Activated CD8-positive, alpha-beta T cell treated with anti-CD3 and anti-CD28 coated beads for 36 hours (primary cell): ENCODE measurements at regions of chr18 and their contacts with region 1.

Region 1: DNA sequence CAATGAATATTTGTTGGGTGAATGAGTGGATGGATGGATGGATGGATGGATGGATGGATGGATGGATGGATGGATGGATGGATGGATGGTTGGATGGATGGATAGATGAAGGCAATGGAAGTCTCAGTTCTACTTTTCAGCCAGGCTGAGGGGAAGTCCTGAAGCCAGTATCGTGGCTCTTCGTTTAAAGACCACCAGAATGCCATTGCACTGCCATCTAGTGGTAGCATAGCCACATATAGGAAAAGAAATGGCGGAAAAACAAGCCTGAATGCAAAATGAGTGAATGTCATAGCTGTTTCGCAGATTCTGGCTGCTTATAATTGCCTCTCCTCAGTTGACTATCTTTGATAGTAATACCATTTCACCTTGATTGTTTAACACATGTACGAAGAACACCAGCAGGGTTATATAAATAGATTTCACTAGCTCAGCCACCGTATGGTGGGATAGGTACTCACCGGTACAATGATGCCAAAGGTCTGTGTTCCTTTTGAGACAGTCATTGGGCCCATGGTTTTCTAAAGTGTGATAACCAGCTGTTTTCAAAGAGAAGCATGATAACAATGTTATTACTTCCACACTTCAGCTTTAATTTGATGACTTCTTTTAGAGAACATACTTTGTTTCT is 62.3 kb upstream of the GREB1L start:
- DNase-seq: peak; percentile 73
- ATAC-seq: peak; percentile 76
- H3K4me3 Mint-ChIP-seq: no peak overlapping the region
- H3K27ac Mint-ChIP-seq: no peak overlapping the region
- H3K4me1 Mint-ChIP-seq: peaks cover 9% of the 10 kb centered on the region
- H3K27me3 Mint-ChIP-seq: no peaks in the 10 kb centered on the region
- CTCF ChIP-seq: peak; percentile 73

Region 2: DNA sequence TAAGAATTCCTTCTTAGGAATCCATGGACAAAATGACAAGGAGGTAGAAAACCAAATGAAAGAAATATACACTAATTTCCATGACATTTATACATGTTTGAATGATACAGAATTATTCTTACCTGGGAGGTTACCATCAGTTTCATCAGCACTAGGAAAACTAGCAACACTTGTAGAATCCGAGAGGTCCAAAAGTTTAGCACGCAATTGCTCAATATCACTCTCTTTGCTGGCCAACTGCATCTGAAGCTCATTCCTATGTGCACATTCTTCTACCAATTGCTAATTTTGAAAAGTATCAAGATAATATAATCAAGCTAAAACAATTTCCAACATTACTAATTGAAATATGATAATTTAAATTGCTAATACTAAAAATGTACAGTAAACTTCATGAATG is 212.9 kb before region 1 on chr18:
- CTCF ChIA-PET with region 1: interaction called, 12 read pairs
- POLR2A ChIA-PET with region 1: no interaction called
- intact Hi-C with region 1: no loop called
- DNase-seq: no peak
- ATAC-seq: no peak
- H3K4me3 Mint-ChIP-seq: no peak overlapping the region
- H3K27ac Mint-ChIP-seq: no peak overlapping the region
- H3K4me1 Mint-ChIP-seq: no peaks in the 10 kb centered on the region
- H3K27me3 Mint-ChIP-seq: no peaks in the 10 kb centered on the region
- CTCF ChIP-seq: no peak

Region 3: DNA sequence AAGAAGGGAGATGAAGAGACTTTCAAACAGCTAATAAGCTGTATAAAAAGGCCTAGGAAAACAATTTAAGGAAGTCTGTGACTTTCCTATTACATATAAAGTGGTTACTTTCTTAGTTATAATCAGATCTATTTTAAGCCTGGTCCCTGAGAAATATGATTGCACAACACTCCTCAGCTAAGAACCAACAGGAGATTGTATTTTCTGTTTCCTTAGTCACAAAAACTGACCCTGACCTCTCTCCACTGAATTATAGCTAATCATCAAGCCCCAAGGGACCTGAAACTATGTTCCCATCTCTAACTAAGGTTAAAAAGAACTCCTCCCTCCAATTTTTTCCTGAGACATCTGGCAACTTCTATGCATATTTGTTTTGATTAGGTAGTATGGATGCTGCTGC is 175.0 kb before region 1 on chr18:
- CTCF ChIA-PET with region 1: interaction called, 8 read pairs
- POLR2A ChIA-PET with region 1: no interaction called
- intact Hi-C with region 1: loop called (anchors 10 kb)
- DNase-seq: no peak
- ATAC-seq: no peak
- H3K4me3 Mint-ChIP-seq: no peak overlapping the region
- H3K27ac Mint-ChIP-seq: no peak overlapping the region
- H3K4me1 Mint-ChIP-seq: peaks cover 11% of the 10 kb centered on the region
- H3K27me3 Mint-ChIP-seq: no peaks in the 10 kb centered on the region
- CTCF ChIP-seq: no peak

Region 4: GRCh38 chr18:21167630-21168377 is 11.9 kb before region 1 on chr18:
- CTCF ChIA-PET with region 1: interaction called, 10 read pairs
- POLR2A ChIA-PET with region 1: no interaction called
- intact Hi-C with region 1: no loop called
- DNase-seq: no peak
- ATAC-seq: no peak
- H3K4me3 Mint-ChIP-seq: no peak overlapping the region
- H3K27ac Mint-ChIP-seq: no peak overlapping the region
- H3K4me1 Mint-ChIP-seq: no peaks in the 10 kb centered on the region
- H3K27me3 Mint-ChIP-seq: peaks cover 6% of the 10 kb centered on the region
- CTCF ChIP-seq: no peak

Region 5: GRCh38 chr18:21391074-21391673 is 211.5 kb after region 1 on chr18:
- CTCF ChIA-PET with region 1: no interaction called
- POLR2A ChIA-PET with region 1: no interaction called
- intact Hi-C with region 1: no loop called
- DNase-seq: no peak
- ATAC-seq: no peak
- H3K4me3 Mint-ChIP-seq: no peak overlapping the region
- H3K27ac Mint-ChIP-seq: no peak overlapping the region
- H3K4me1 Mint-ChIP-seq: no peaks in the 10 kb centered on the region
- H3K27me3 Mint-ChIP-seq: peaks cover 3% of the 10 kb centered on the region
- CTCF ChIP-seq: no peak